Upper lobe of right lung (tissue), 1 donor: ENCODE measurements at regions of chr11 and their contacts with region 1.

Region 1: GRCh38 chr11:120108154-120108865 is 29.6 kb downstream of the TRIM29 start:
- DNase-seq: peak; percentile 78
- ATAC-seq: peak; percentile 89
- H3K4me3 ChIP-seq: no peak overlapping the region
- H3K27ac ChIP-seq: no peak overlapping the region
- H3K4me1 ChIP-seq: no peaks in the 10 kb centered on the region
- H3K27me3 ChIP-seq: no peaks in the 10 kb centered on the region
- CTCF ChIP-seq: peak; percentile 100

Region 2: GRCh38 chr11:119664063-119664572 is 444.2 kb before region 1 on chr11:
- intact Hi-C with region 1: loop called (anchors 5 kb)
- DNase-seq: no peak
- ATAC-seq: no peak
- H3K4me3 ChIP-seq: no peak overlapping the region
- H3K27ac ChIP-seq: no peak overlapping the region
- H3K4me1 ChIP-seq: no peaks in the 10 kb centered on the region
- H3K27me3 ChIP-seq: no peaks in the 10 kb centered on the region
- CTCF ChIP-seq: no peak